ENCODE measurements at regions of chr20 and their contacts with region 1.

Region 1: GRCh38 chr20:50070991-50071888 is 41.7 kb downstream of the UBE2V1 start:
- DNase-seq: no peak
- H3K4me3 ChIP-seq: peak overlapping the region; percentile 30
- H3K27me3 ChIP-seq: no peaks in the 10 kb centered on the region
- CTCF ChIP-seq: peak; percentile 99

Region 2: GRCh38 chr20:49785852-49786175 is 285.4 kb before region 1 on chr20:
- CTCF ChIA-PET with region 1: no interaction called
- POLR2A ChIA-PET with region 1: no interaction called
- DNase-seq: no peak
- H3K4me3 ChIP-seq: no peak overlapping the region
- H3K27me3 ChIP-seq: no peaks in the 10 kb centered on the region
- CTCF ChIP-seq: no peak

Region 3: DNA sequence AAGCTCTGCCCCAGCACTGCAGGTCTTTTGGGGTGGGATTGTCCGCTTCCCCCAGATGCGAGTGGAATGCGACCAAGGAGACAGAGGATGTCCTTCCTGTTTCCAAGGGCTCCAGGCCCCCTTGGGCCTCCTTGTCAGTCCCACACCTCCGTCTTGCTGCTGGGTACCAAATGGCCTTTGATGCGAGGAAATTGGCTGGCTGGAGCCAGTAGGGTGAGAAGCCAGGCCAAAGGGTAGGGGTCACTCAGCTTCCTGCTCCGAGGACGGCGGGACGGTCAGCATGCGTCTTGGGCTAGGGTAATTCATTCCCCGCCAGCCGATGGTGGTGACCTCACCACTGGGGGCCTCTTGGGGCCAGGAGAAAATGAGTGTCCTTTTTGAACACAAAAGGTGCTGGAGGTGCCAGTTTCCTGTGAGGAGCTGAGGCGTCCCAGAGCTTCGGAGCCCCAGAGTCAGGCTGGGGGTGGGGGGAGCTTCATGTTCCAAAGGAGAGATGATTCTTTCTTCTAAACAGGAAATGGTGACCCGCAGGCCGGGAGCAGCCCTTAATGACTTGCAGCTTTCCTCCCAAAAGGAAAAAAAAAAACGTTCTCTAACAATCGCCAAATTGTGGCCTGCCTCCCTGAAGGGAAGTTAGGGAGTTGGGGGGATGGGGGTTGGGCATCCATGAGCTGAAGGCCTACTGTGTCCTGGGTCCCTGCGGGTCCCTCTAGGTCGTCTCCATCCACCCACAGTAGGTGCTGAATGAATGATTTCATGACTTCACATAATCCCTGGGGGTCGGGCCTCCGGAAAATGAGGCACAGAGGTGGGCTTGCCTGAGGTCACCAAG is 81.8 kb before region 1 on chr20:
- CTCF ChIA-PET with region 1: interaction called, 590 read pairs
- POLR2A ChIA-PET with region 1: interaction called, 8 read pairs
- DNase-seq: peak; percentile 66
- H3K4me3 ChIP-seq: no peak overlapping the region
- H3K27me3 ChIP-seq: no peaks in the 10 kb centered on the region
- CTCF ChIP-seq: no peak

Measured in BJ (cell line).